ENCODE measurements at regions of chr7 and their contacts with region 1.

Region 1: GRCh38 chr7:110253093-110253492 is 837.8 kb upstream of the LRRN3 start:
- DNase-seq: no peak
- ATAC-seq: no peak
- H3K4me3 ChIP-seq: no peak overlapping the region
- H3K4me3 Mint-ChIP-seq: no peak overlapping the region
- H3K27ac ChIP-seq: no peak overlapping the region
- H3K27ac Mint-ChIP-seq: no peak overlapping the region
- H3K4me1 ChIP-seq: no peaks in the 10 kb centered on the region
- H3K4me1 Mint-ChIP-seq: no peaks in the 10 kb centered on the region
- H3K27me3 ChIP-seq: no peaks in the 10 kb centered on the region
- H3K27me3 Mint-ChIP-seq: no peaks in the 10 kb centered on the region
- CTCF ChIP-seq: no peak

Region 2: DNA sequence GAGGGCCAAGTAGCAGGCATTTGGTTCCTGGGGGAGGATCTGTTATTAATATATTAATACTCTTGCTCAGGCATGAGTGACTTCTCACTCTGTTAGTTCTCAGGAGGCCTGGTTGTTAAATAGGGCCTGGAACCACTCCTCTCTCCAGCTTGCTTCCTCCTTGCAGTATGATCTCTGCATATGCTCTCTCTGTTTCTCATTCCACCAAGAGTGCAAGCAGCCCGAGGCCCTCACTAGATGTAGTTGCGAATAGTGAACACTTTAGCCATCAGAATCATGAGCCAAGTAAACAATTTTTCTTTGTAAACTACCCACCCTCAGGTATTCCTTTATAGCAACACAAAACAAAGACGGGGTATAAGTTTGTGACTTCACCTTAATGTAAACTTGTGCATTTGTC is 899.1 kb before region 1 on chr7:
- CTCF ChIA-PET with region 1: no interaction called
- POLR2A ChIA-PET with region 1: no interaction called
- intact Hi-C with region 1: loop called in 1 of 2 experiments (anchors 5 kb)
- DNase-seq: no peak
- ATAC-seq: no peak
- H3K4me3 ChIP-seq: no peak overlapping the region
- H3K4me3 Mint-ChIP-seq: no peak overlapping the region
- H3K27ac ChIP-seq: no peak overlapping the region
- H3K27ac Mint-ChIP-seq: no peak overlapping the region
- H3K4me1 ChIP-seq: no peaks in the 10 kb centered on the region
- H3K4me1 Mint-ChIP-seq: no peaks in the 10 kb centered on the region
- H3K27me3 ChIP-seq: no peaks in the 10 kb centered on the region
- H3K27me3 Mint-ChIP-seq: no peaks in the 10 kb centered on the region
- CTCF ChIP-seq: no peak

Region 3: GRCh38 chr7:110347081-110347480 is 94.0 kb after region 1 on chr7:
- CTCF ChIA-PET with region 1: no interaction called
- POLR2A ChIA-PET with region 1: no interaction called
- intact Hi-C with region 1: no loop called
- DNase-seq: no peak
- ATAC-seq: no peak
- H3K4me3 ChIP-seq: no peak overlapping the region
- H3K4me3 Mint-ChIP-seq: no peak overlapping the region
- H3K27ac ChIP-seq: no peak overlapping the region
- H3K27ac Mint-ChIP-seq: no peak overlapping the region
- H3K4me1 ChIP-seq: no peaks in the 10 kb centered on the region
- H3K4me1 Mint-ChIP-seq: no peaks in the 10 kb centered on the region
- H3K27me3 ChIP-seq: no peaks in the 10 kb centered on the region
- H3K27me3 Mint-ChIP-seq: no peaks in the 10 kb centered on the region
- CTCF ChIP-seq: no peak